PC-3 (cell line): ENCODE measurements at regions of chr13 and their contacts with region 1.

Region 1: GRCh38 chr13:72062566-72062965 is 195.6 kb upstream of the DACH1 start:
- DNase-seq: peak; percentile 85
- ATAC-seq: peak; percentile 99
- H3K4me3 ChIP-seq: no peak overlapping the region
- H3K27ac ChIP-seq: no peak overlapping the region
- H3K4me1 ChIP-seq: peaks cover 12% of the 10 kb centered on the region
- H3K27me3 ChIP-seq: no peaks in the 10 kb centered on the region
- CTCF ChIP-seq: no peak

Region 2: DNA sequence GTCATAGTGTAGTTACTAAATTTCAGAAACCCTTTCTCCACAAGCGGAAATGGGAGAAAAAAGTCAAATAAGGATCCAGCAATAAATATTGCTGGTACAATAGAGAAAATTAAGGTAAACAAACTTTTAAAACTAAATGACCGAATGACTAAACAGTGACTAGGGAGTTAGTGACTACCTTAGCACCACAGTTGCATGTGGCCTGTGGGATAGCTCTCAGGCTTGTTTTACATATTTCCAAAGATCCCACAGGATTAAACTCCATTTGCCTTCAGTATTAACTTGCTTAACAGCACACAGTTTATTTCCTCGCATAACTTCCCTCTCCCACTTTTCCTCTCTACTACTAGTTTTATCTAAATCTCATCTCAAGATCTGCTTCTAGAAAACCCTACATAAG is 1130.1 kb before region 1 on chr13:
- CTCF ChIA-PET with region 1: no interaction called
- POLR2A ChIA-PET with region 1: no interaction called
- intact Hi-C with region 1: no loop called
- DNase-seq: peak; percentile 50
- ATAC-seq: peak; percentile 94
- H3K4me3 ChIP-seq: no peak overlapping the region
- H3K27ac ChIP-seq: peak overlapping the region; percentile 92
- H3K4me1 ChIP-seq: peaks cover 12% of the 10 kb centered on the region
- H3K27me3 ChIP-seq: no peaks in the 10 kb centered on the region
- CTCF ChIP-seq: no peak

Region 3: DNA sequence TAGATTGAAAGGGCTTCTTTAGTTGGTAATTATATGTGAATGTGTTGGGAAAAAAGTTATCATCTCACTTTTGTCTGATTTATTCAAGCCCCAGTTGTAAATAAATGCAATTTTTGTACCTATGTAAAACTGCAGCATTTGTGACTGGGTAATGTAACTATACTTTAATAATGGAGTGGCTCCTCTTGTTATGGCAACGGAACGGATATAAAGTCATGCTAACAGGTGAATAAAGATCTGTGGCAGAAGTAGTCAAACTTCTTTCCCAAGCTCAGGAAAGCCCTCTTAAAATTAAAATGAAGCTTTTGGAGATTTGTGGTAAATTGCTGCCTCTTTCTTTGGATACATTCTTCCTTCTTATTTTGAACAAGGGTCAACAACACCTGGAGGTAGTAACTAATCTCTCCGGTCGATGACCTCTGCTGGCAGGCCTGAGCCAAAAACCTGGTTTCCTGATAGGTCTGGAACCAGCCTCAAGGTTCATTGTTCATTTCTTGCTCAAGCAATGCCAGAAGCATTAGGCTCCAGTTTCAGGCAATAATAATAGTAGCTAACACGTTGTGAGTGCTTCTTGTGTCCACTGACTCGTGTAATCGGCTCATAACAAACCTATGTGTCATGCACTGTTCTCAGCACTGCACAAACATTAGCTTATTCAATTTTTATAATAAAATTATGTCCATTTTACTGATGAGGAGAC is 117.8 kb after region 1 on chr13:
- CTCF ChIA-PET with region 1: no interaction called
- POLR2A ChIA-PET with region 1: no interaction called
- intact Hi-C with region 1: loop called (anchors 10 kb)
- DNase-seq: peak; percentile 90
- ATAC-seq: peak; percentile 99
- H3K4me3 ChIP-seq: no peak overlapping the region
- H3K27ac ChIP-seq: peak overlapping the region; percentile 62
- H3K4me1 ChIP-seq: peaks cover 9% of the 10 kb centered on the region
- H3K27me3 ChIP-seq: no peaks in the 10 kb centered on the region
- CTCF ChIP-seq: 0 out of 2 replicates have a peak, but pooled peaks have one; percentile 16